ENCODE measurements at regions of chr4 and their contacts with region 1.

Region 1: DNA sequence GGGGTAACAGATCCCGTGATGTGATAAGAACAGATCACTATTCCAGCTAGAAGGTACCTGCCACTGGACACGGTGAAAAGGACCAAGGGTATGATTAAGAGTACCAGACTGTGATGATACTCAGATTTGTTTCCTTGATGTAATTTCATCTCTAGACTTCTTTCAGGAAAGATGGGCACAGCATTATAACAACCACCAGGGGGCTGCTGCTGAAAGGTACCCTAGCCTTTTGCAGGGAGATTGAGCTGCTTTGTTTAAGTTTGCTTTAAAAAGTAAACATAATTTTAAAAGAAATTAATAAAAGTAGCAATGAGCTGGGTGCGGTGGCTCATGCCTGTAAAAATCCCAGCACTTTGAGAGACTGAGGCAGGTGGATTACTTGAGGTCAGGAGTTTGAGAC is 145.4 kb downstream of the EMCN start:
- DNase-seq: peak; percentile 4
- H3K4me3 Mint-ChIP-seq: no peak overlapping the region
- H3K27ac Mint-ChIP-seq: no peak overlapping the region
- H3K4me1 Mint-ChIP-seq: no peaks in the 10 kb centered on the region
- H3K27me3 Mint-ChIP-seq: no peaks in the 10 kb centered on the region
- CTCF ChIP-seq: no peak

Region 2: DNA sequence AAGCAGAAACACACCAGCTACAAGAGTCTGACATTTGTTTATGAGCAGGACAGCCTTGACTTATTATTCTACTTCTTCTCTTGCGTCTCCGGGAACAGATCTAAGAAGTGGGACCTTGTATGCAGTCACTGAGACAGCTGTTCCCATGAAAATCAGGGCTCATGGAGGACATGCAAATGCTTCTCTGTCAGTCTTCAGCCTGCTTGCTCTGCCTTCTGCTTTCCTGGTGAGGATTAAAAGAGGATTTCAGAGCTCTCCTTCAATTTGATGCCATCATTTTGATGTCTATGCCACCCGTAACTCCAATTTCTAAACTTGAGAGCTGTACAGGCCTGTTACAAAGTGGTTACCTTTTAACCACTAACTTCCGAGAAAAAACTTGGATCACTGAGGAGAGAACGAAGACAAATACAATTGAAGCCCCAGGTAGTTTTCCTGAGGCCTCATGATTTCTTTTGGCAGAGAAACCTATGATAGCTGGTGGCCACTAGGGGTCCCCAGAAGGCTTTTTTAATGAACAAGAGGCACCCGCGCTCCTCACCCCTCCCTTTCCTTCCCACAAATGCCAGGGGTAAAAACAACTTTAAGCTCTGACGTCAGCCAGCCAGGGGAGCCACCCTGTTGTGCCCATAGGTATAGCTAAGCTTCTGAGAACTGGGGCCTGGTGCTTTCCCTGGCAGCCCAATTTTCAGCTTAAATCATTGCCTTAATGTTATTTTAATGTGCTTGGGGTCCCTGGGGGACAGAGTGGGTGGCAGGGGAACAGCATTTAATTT is 279.2 kb before region 1 on chr4:
- CTCF ChIA-PET with region 1: no interaction called
- intact Hi-C with region 1: loop called (anchors 10 kb)
- DNase-seq: peak; percentile 76
- H3K4me3 Mint-ChIP-seq: no peak overlapping the region
- H3K27ac Mint-ChIP-seq: no peak overlapping the region
- H3K4me1 Mint-ChIP-seq: peaks cover 10% of the 10 kb centered on the region
- H3K27me3 Mint-ChIP-seq: no peaks in the 10 kb centered on the region
- CTCF ChIP-seq: peak; percentile 62

Measured in Calu3 (cell line).